ENCODE measurements at regions of chr3 and their contacts with region 1.

Region 1: GRCh38 chr3:33883538-33883950 is 85.1 kb downstream of the PDCD6IP start:
- DNase-seq: no peak
- H3K4me3 ChIP-seq: no peak overlapping the region
- H3K27ac ChIP-seq: no peak overlapping the region
- H3K4me1 ChIP-seq: no peaks in the 10 kb centered on the region
- H3K27me3 ChIP-seq: no peaks in the 10 kb centered on the region
- CTCF ChIP-seq: peak; percentile 46 to 50 (median 46)
- EP300 ChIP-seq: no peak
- POLR2A ChIP-seq: no peak

Region 2: DNA sequence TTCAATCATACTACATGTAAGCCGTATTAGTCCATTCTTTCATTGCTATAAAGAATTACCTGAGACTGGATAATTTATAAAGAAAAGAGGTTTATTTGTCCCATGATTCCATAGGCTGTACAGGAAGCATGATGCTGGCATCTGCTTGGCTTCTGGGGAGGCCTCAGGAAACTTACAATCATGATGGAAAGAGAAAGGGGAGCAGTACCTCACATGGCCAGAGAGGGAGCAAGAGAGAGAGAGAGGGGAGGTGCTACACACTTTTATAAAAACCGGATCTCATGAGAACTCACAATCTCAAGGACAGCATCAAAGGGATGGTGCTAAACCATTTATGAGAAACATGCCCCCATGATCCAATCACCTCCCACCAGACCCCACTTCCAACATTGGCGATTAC is 151.2 kb before region 1 on chr3:
- intact Hi-C with region 1: no loop called
- DNase-seq: no peak
- H3K4me3 ChIP-seq: no peak overlapping the region
- H3K27ac ChIP-seq: no peak overlapping the region
- H3K4me1 ChIP-seq: no peaks in the 10 kb centered on the region
- H3K27me3 ChIP-seq: no peaks in the 10 kb centered on the region
- CTCF ChIP-seq: no peak
- EP300 ChIP-seq: no peak
- POLR2A ChIP-seq: no peak

Region 3: GRCh38 chr3:33855884-33856546 is 27.5 kb before region 1 on chr3:
- intact Hi-C with region 1: no loop called
- DNase-seq: no peak
- H3K4me3 ChIP-seq: no peak overlapping the region
- H3K27ac ChIP-seq: no peak overlapping the region
- H3K4me1 ChIP-seq: no peaks in the 10 kb centered on the region
- H3K27me3 ChIP-seq: no peaks in the 10 kb centered on the region
- CTCF ChIP-seq: no peak
- EP300 ChIP-seq: no peak
- POLR2A ChIP-seq: no peak

Region 4: GRCh38 chr3:34351882-34352777 is 468.6 kb after region 1 on chr3:
- intact Hi-C with region 1: no loop called
- DNase-seq: no peak
- H3K4me3 ChIP-seq: no peak overlapping the region
- H3K27ac ChIP-seq: no peak overlapping the region
- H3K4me1 ChIP-seq: no peaks in the 10 kb centered on the region
- H3K27me3 ChIP-seq: no peaks in the 10 kb centered on the region
- CTCF ChIP-seq: no peak
- EP300 ChIP-seq: no peak
- POLR2A ChIP-seq: no peak

Region 5: GRCh38 chr3:34683851-34684250 is 800.3 kb after region 1 on chr3:
- intact Hi-C with region 1: loop called in 1 of 4 experiments (anchors 10 kb)
- DNase-seq: peak in 1 of 5 donors; percentile 54
- H3K4me3 ChIP-seq: no peak overlapping the region
- H3K27ac ChIP-seq: no peak overlapping the region
- H3K4me1 ChIP-seq: no peaks in the 10 kb centered on the region
- H3K27me3 ChIP-seq: no peaks in the 10 kb centered on the region
- CTCF ChIP-seq: no peak
- EP300 ChIP-seq: no peak
- POLR2A ChIP-seq: no peak

Measured in ovary (tissue), 10 donors.